B cell (primary cell): ENCODE measurements at regions of chr16 and their contacts with region 1.

Region 1: GRCh38 chr16:24189941-24190340 is 66.2 kb upstream of the CACNG3 start:
- DNase-seq: no peak
- ATAC-seq: no peak
- H3K4me3 ChIP-seq: no peak overlapping the region
- H3K4me3 Mint-ChIP-seq: no peak overlapping the region
- H3K27ac ChIP-seq: no peak overlapping the region
- H3K27ac Mint-ChIP-seq: no peak overlapping the region
- H3K4me1 ChIP-seq: no peaks in the 10 kb centered on the region
- H3K4me1 Mint-ChIP-seq: no peaks in the 10 kb centered on the region
- H3K27me3 ChIP-seq: no peaks in the 10 kb centered on the region
- H3K27me3 Mint-ChIP-seq: no peaks in the 10 kb centered on the region
- CTCF ChIP-seq: no peak

Region 2: GRCh38 chr16:24125214-24125613 is 64.7 kb before region 1 on chr16:
- CTCF ChIA-PET with region 1: no interaction called
- POLR2A ChIA-PET with region 1: no interaction called
- intact Hi-C with region 1: loop called (anchors 10 kb)
- DNase-seq: no peak
- ATAC-seq: no peak
- H3K4me3 ChIP-seq: no peak overlapping the region
- H3K4me3 Mint-ChIP-seq: no peak overlapping the region
- H3K27ac ChIP-seq: no peak overlapping the region
- H3K27ac Mint-ChIP-seq: no peak overlapping the region
- H3K4me1 ChIP-seq: no peaks in the 10 kb centered on the region
- H3K4me1 Mint-ChIP-seq: no peaks in the 10 kb centered on the region
- H3K27me3 ChIP-seq: no peaks in the 10 kb centered on the region
- H3K27me3 Mint-ChIP-seq: no peaks in the 10 kb centered on the region
- CTCF ChIP-seq: no peak